ENCODE measurements at regions of chr4 and their contacts with region 1.

Region 1: DNA sequence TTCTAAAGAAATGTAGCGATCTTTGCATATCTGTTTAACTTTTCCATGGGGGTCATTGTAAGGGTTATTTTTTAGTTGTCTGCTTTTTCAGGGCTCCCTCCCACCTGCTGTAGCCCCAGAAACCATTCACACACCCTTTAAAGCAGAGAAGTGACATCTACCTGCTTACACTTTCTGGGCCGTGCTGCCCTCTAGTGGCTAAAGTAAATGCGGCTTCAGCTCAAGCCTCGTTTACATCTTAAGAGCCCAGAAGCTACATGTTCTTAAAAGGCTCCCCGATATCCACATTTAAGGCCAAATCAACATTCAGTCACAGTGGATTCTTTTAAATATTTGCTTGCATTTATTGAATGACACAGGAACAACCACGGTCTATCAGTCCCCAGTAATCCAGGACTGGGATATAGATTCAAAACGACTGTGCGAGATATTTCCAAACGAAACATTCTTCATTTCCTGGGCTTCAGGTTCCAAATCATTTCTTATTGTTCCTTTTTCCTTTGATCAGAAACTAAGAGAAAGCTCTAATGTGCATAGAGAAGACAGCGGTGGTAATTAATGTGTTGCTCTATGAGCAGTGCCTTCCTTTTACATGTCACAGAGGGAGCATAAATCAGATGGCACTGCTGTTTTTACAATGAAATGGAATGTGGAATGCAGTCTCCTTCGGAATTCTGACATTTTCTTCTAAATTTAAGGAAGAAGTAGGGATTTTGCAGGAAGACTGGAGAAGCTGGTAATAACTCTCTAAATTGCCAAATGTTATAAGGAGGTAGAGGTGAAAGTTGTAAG is 119.9 kb downstream of the RASGEF1B start:
- DNase-seq: peak; percentile 47 to 91 (median 82)

Region 2: DNA sequence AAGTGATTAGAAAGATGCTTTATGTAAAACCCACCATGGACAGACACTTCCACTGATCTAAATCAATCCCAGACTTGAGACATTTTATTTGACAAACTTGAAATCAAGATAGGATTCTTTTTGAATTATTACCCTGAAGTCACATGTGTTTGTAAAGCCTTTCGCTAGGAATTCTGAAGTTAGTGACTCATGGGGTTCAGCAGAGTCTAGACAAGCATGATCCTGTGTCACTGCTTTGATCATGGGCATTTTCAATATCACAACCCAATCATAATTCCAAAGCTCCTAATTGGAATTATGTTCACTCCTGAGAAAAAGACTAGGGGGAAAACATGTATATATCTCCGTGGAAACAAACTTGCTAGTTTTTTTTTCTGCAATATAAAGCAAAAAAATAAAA is 388.8 kb before region 1 on chr4:
- intact Hi-C with region 1: no loop called
- DNase-seq: no peak

Region 3: DNA sequence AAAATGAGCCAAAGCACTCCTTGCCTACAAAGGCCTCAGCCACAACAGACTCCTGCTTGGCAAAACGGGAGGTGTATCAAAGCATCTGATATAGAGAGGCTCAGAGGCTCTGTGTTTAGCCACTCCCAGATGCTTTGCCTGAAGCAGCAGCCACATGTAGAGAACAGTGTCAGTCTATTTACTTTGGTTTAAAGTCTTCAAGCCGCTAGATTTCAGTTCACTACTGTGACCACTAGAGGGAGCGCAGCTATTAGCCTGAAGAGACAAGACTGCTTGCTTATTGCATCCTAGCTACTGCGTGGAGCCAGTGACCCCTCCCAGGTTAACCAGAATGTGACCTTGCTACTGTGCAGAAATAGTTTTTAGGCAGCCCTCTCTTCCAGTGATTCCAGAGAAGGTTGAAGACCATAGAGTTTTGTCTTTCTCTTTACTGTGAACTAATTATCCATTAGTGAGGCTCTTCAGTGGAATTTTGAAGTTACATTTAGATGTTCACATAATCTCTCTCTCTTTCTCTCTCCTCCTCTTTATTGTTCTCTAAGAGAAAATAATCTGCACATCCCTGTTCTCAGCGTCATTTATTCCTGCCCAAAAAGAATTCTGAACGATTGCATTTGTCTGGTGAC is 282.0 kb before region 1 on chr4:
- intact Hi-C with region 1: loop called (anchors 5 kb)
- DNase-seq: peak in 41 of 42 donors; percentile 1 to 90 (median 72)

Region 4: DNA sequence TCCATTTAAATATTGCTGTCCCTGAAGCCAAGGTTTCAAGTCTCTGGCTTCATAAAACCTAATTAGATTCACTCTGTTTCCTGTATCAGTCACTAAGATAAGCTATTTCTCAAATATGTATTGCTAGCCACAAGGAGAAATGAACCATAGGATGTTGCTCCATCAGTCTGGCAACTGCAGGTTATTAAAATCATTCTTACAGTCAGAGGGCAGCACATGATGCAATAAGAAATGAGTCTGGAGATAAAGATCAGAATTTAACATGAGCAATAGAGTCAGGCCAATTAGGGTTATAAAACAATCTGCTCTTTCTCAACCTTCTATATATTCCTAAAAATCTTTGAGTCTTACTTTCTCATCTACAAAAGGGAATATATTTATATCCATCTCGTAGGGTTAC is 144.0 kb before region 1 on chr4:
- intact Hi-C with region 1: no loop called
- DNase-seq: no peak

Region 5: DNA sequence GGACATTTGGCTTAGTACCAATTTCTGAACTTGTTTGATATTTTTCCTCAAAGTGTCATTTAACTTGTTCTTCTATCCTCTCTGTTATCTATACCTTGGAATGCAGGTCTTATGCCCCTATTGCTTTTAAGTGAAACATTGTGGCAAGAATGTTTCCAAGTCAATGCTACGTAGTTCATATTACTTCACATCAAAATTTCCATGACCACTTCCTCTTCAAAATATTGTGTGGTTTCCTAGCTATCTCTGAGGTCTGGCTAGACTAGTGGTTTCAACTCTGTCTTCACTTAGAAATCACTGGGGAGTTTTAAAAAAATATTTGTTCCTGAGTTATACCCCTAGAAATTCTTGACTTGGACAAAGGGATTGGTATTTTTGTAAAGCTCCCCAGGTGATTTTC is 140.1 kb after region 1 on chr4:
- intact Hi-C with region 1: no loop called
- DNase-seq: no peak

Region 6: GRCh38 chr4:81505004-81505598 is 153.3 kb after region 1 on chr4:
- intact Hi-C with region 1: no loop called
- DNase-seq: peak; percentile 37 to 86 (median 69)